ENCODE measurements at regions of chr1 and their contacts with region 1.

Region 1: GRCh38 chr1:227357171-227357880 is 39.0 kb upstream of the CDC42BPA start:
- DNase-seq: peak; percentile 96
- H3K4me3 ChIP-seq: peak overlapping the region in 1 of 3 experiments; percentile 36
- H3K27ac ChIP-seq: peak overlapping the region; percentile 96
- H3K4me1 ChIP-seq: peaks cover 37% of the 10 kb centered on the region
- H3K27me3 ChIP-seq: no peaks in the 10 kb centered on the region
- CTCF ChIP-seq: no peak
- POLR2A ChIP-seq: peak; percentile 77

Region 2: GRCh38 chr1:227131193-227131592 is 226.1 kb before region 1 on chr1:
- CTCF ChIA-PET with region 1: no interaction called
- POLR2A ChIA-PET with region 1: no interaction called
- dilution Hi-C with region 1: no loop called
- intact Hi-C with region 1: loop called (anchors 2 kb)
- DNase-seq: peak; percentile 51
- H3K4me3 ChIP-seq: no peak overlapping the region
- H3K27ac ChIP-seq: no peak overlapping the region
- H3K4me1 ChIP-seq: peaks cover 23% of the 10 kb centered on the region
- H3K27me3 ChIP-seq: no peaks in the 10 kb centered on the region
- CTCF ChIP-seq: peak; percentile 37 to 43
- POLR2A ChIP-seq: no peak

Region 3: GRCh38 chr1:227370533-227371254 is 13.4 kb after region 1 on chr1:
- CTCF ChIA-PET with region 1: interaction called, 7 read pairs
- POLR2A ChIA-PET with region 1: interaction called, 6 read pairs
- dilution Hi-C with region 1: no loop called
- intact Hi-C with region 1: loop called (anchors 2 kb)
- DNase-seq: peak; percentile 80
- H3K4me3 ChIP-seq: no peak overlapping the region
- H3K27ac ChIP-seq: peak overlapping the region; percentile 14
- H3K4me1 ChIP-seq: peaks cover 23% of the 10 kb centered on the region
- H3K27me3 ChIP-seq: no peaks in the 10 kb centered on the region
- CTCF ChIP-seq: no peak
- POLR2A ChIP-seq: no peak

Region 4: GRCh38 chr1:227396539-227397353 is 39.4 kb after region 1 on chr1:
- CTCF ChIA-PET with region 1: no interaction called
- POLR2A ChIA-PET with region 1: interaction called, 5 read pairs
- dilution Hi-C with region 1: no loop called
- intact Hi-C with region 1: loop called (anchors 2 kb)
- DNase-seq: no peak
- H3K4me3 ChIP-seq: no peak overlapping the region
- H3K27ac ChIP-seq: no peak overlapping the region
- H3K4me1 ChIP-seq: peaks cover 16% of the 10 kb centered on the region
- H3K27me3 ChIP-seq: no peaks in the 10 kb centered on the region
- CTCF ChIP-seq: no peak
- POLR2A ChIP-seq: no peak

Measured in endothelial cell of umbilical vein (primary cell).